Activated naive CD4-positive, alpha-beta T cell treated with anti-CD3 and anti-CD28 coated beads for 36 hours (primary cell): ENCODE measurements at regions of chr3 and their contacts with region 1.

Region 1: GRCh38 chr3:38173834-38174418 is 8.6 kb downstream of the OXSR1 start:
- DNase-seq: no peak
- H3K4me3 Mint-ChIP-seq: no peak overlapping the region
- H3K27ac Mint-ChIP-seq: no peak overlapping the region
- H3K4me1 Mint-ChIP-seq: peaks cover 63% of the 10 kb centered on the region
- H3K27me3 Mint-ChIP-seq: no peaks in the 10 kb centered on the region

Region 2: GRCh38 chr3:38138349-38139190 is 35.4 kb before region 1 on chr3 and contains the start of gene MYD88:
- CTCF ChIA-PET with region 1: no interaction called
- intact Hi-C with region 1: no loop called
- DNase-seq: peak; percentile 86
- H3K4me3 Mint-ChIP-seq: peak within 1 kb of the TSS; percentile 88
- H3K27ac Mint-ChIP-seq: peak within 1 kb of the TSS; percentile 99
- H3K4me1 Mint-ChIP-seq: peaks cover 47% of the 10 kb centered on the region
- H3K27me3 Mint-ChIP-seq: no peaks in the 10 kb centered on the region
- total RNA-seq, gene MYD88: 16.6 to 19.3 TPM

Region 3: GRCh38 chr3:38190481-38190881 is 16.6 kb after region 1 on chr3:
- CTCF ChIA-PET with region 1: no interaction called
- intact Hi-C with region 1: loop called (anchors 2 kb)
- DNase-seq: no peak
- H3K4me3 Mint-ChIP-seq: no peak overlapping the region
- H3K27ac Mint-ChIP-seq: no peak overlapping the region
- H3K4me1 Mint-ChIP-seq: peaks cover 2% of the 10 kb centered on the region
- H3K27me3 Mint-ChIP-seq: no peaks in the 10 kb centered on the region

Region 4: DNA sequence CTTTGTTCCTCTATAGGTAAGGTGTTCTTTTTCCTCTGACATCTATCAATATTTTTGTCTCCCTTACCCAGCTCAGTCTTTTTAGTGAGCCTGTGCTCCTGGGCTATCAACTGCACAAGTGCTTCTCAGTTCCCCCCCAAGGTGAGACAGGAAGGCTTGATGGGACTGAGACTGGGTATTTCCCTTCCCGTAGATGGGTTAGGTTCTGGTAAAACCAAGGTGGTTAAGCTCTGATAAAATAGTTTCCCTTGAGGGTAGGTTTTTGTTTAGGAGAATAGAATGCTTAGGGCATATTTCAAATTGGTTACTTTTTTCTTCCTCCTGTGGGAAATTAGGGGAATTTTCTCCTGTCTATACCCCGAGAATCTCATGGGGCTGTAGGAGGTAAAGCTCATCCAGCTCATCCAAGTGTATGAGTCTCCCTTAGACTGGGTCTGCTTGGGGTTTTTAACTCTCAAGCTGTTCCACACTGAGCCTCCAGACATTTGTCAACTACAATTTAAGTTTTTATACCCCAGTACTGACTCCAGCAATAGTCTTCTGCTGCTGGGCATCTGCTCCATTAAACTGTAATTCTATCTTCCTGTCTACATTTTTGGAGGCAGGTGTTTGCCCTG is 36.3 kb after region 1 on chr3:
- CTCF ChIA-PET with region 1: no interaction called
- intact Hi-C with region 1: loop called (anchors 2 kb)
- DNase-seq: peak; percentile 25
- H3K4me3 Mint-ChIP-seq: no peak overlapping the region
- H3K27ac Mint-ChIP-seq: peak overlapping the region; percentile 4
- H3K4me1 Mint-ChIP-seq: peaks cover 57% of the 10 kb centered on the region
- H3K27me3 Mint-ChIP-seq: no peaks in the 10 kb centered on the region